Sigmoid colon (tissue), 7 donors: ENCODE measurements at regions of chr19 and their contacts with region 1.

Region 1: DNA sequence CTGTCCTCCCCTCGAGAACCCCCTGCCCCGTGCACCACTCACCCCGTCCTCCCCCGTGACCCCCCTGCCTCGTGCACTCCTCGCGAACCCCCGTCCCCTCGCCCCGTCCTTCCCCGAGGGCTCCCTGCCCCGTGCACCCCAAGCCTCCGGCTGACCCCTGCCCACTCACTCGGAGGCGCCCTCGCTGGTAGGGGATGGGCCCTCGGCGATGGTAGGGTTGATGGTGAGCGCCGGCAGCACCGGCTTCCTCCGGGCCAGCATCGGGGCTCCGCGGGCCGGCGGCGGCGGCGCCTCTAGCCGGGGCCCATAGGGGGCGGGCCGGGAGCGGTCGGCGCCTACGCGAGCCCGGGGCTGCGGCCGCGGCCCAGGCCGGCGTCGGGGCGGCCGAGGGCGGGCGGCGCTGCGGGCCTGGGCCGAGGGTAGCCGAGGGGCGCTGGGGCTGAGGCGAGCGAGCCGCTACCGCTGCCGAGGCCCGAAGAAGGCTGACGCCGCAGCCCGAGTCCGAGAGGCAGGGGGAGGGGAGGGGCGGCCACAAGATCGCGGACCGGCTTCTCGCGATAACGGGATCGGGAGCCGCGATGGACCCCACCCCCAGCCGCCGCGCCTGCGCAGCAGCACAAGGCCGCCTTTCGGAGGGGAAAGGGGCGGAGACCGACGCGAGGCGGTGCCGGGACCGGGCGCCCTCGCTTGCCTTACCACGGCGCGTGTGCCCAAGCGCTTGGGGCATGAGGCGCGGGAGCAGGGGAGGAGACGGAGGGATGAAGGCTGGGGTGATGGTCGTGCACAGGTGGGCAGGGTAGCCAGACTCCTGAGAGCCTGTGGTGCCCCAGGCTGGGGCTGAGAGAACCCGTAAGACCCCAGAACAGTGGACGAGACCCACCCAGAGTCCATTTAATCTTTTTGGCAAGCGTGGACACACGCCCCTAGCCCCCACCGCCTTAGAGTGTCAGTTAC is at the start of gene MAP2K2:
- DNase-seq: peak; percentile 98
- H3K4me3 ChIP-seq: peak within 1 kb of the TSS; percentile 84 to 98 (median 96)
- H3K27ac ChIP-seq: peak within 1 kb of the TSS; percentile 73 to 86 (median 80)
- H3K4me1 ChIP-seq: peaks cover 0 to 34% (median 32%) of the 10 kb centered on the region in 4 donors
- H3K27me3 ChIP-seq: no peaks in the 10 kb centered on the region
- CTCF ChIP-seq: no peak
- EP300 ChIP-seq: no peak
- POLR2A ChIP-seq: peak; percentile 18 to 72
- total RNA-seq, gene MAP2K2: 48.2 to 76.4 (median 65.3) TPM

Region 2: DNA sequence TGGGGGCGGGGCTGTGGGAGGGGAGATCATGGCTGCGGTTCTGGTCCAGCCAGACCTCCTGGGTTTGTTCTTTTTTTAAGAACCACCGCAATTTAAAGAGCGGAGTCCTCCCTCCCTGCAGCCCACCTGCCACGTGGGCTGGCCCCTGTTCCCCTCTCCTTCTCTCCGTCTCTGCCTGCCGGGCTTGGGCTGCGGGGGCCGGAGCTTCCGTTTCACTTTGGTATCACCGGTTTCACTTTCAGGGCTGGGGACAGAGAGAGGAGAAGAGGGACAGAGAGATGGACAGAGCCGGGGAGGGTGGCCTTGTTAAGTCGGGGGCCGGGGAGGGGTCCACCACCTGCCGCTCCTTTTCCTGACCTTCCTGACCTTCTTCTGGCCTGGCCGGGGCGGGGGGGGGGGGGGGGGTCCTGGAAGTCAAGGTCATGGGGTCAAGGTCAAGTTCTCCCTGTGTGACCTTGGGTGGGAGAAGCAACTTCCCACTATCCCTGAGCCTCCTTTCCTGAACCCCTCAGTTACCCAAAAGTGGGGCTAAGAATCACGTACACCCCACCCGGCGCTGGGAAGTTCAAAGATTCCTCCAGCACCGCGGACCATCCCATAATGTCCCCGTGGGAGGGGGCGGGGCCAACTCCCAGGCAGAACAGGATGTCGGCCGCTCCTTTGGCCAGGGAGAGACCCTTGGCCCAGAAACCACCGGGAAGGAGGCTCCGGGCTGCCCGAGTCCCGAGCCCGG is 45.8 kb before region 1 on chr19:
- intact Hi-C with region 1: loop called (anchors 2 kb)
- DNase-seq: peak; percentile 89
- H3K4me3 ChIP-seq: peak overlapping the region; percentile 47 to 59 (median 58)
- H3K27ac ChIP-seq: peak overlapping the region; percentile 82 to 88 (median 83)
- H3K4me1 ChIP-seq: peaks cover 0 to 19% (median 12%) of the 10 kb centered on the region in 4 donors
- H3K27me3 ChIP-seq: no peaks in the 10 kb centered on the region
- CTCF ChIP-seq: no peak
- EP300 ChIP-seq: no peak
- POLR2A ChIP-seq: no peak

Region 3: DNA sequence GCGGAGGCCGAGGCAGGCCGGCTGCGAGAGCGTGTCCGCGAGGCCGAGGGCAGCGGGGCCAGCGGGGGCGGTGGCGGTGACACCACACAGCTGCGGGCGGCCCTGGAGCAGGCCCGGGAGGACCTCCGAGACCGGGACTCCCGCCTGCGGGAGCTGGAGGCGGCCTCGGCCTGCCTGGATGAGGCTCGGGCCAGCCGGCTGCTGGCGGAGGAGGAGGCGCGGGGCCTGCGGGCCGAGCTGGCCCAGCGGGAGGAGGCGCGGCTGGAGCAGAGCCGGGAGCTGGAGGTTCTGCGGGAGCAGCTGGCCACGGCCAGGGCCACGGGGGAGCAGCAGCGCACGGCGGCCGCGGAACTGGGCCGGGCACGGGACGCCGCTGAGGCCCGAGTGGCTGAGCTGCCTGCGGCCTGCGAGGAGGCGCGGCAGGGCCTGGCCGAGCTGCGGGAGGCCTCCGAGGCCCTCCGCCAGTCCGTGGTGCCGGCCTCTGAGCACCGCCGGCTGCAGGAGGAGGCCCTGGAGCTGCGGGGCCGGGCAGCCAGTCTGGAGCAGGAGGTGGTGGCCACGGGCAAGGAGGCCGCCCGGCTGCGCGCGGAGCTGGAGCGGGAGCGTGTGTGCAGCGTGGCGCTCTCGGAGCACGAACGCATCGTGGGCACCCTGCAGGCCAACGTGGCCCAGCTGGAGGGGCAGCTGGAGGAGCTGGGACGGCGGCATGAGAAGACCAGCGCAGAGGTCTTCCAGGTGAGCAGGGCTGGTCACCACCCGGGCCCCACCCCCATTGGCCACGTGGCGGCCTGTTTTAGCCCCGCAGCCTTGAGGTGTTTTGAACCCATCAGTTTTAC is 93.8 kb after region 1 on chr19:
- intact Hi-C with region 1: no loop called
- DNase-seq: no peak
- H3K4me3 ChIP-seq: no peak overlapping the region
- H3K27ac ChIP-seq: no peak overlapping the region
- H3K4me1 ChIP-seq: no peaks in the 10 kb centered on the region
- H3K27me3 ChIP-seq: no peaks in the 10 kb centered on the region
- CTCF ChIP-seq: no peak
- EP300 ChIP-seq: no peak
- POLR2A ChIP-seq: no peak